Activated CD4-positive, alpha-beta memory T cell treated with anti-CD3 and anti-CD28 coated beads, Interleukin-2, amount 10 ng/mL, durations not matched to agents 7 days and 5 days (primary cell): ENCODE measurements at regions of chr1 and their contacts with region 1.

Region 1: DNA sequence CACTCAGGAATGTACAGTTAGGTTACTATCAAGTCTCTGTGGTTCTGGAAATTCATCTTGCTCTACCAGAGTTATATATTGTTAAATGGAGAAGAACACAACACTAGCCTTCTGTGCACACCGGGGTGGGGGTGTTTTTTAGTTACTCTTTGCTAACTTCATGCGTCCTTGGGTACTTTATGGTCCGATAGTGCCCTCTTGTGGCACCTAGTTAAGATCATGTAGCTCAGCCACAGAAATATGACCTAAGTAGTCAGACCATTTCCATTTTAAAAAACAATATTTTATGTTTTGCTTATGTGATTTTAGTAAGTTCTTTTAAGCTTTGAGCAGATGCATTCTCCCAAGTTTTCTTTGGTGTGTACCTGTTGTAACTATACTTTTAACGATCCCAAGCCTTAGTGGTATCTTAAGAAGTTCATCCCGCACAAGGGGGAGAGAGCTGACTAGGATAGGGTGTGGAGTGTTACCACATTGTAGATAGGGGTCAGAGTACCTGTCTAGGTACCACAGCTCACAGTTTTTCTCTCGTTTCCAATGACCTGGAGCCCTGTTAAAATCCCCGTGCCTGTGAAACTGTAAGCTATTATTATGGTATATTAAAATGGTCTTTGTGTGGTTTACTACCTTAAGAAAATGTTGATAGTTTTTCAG is 20.6 kb upstream of the SH3D21 start:
- DNase-seq: peak; percentile 65
- H3K4me3 Mint-ChIP-seq: no peak overlapping the region
- H3K27ac Mint-ChIP-seq: peak overlapping the region; percentile 61
- H3K4me1 Mint-ChIP-seq: peaks cover 21% of the 10 kb centered on the region
- H3K27me3 Mint-ChIP-seq: no peaks in the 10 kb centered on the region

Region 2: DNA sequence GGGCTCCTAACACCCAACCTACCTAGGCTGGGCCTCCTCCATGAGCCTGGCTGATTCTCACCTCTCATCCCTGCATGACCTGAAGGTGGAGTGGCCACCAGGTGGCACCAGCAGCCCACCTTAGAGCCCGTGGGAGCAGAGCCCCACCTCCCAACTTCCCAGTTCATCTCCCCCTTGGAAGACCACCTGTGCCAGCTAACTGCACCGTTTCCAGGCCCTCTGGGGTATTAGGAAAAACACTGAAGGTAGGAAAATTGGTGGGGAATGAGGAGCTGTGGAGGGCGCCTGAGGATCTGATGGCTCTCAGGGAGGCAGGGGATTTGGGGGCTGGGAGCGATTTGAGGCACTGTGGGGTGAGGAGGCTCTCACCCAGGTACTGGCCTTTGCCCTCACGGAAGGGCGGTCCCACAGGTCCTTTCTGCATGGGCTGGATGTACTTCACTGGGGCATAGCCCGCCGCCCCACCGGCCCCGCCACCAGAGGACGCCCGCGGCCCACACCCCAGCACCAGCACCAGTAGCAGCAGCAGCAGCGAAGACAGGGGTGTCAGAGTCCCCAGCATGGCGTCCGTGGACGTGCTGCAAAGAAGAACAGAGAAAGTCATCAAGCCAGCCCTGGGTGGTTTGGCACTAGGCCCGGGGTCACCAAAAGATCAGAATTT is 185.8 kb before region 1 on chr1:
- CTCF ChIA-PET with region 1: interaction called, 22 read pairs
- POLR2A ChIA-PET with region 1: no interaction called
- DNase-seq: peak; percentile 78
- H3K4me3 Mint-ChIP-seq: no peak overlapping the region
- H3K27ac Mint-ChIP-seq: no peak overlapping the region
- H3K4me1 Mint-ChIP-seq: peaks cover 7% of the 10 kb centered on the region
- H3K27me3 Mint-ChIP-seq: no peaks in the 10 kb centered on the region

Region 3: GRCh38 chr1:36160949-36161485 is 124.6 kb before region 1 on chr1:
- CTCF ChIA-PET with region 1: interaction called, 13 read pairs
- POLR2A ChIA-PET with region 1: interaction called, 8 read pairs
- DNase-seq: peak; percentile 84
- H3K4me3 Mint-ChIP-seq: peak overlapping the region; percentile 74
- H3K27ac Mint-ChIP-seq: peak overlapping the region; percentile 88
- H3K4me1 Mint-ChIP-seq: peaks cover 67% of the 10 kb centered on the region
- H3K27me3 Mint-ChIP-seq: no peaks in the 10 kb centered on the region

Region 4: GRCh38 chr1:36269408-36269838 is 16.2 kb before region 1 on chr1:
- CTCF ChIA-PET with region 1: interaction called, 11 read pairs
- POLR2A ChIA-PET with region 1: no interaction called
- DNase-seq: no peak
- H3K4me3 Mint-ChIP-seq: no peak overlapping the region
- H3K27ac Mint-ChIP-seq: no peak overlapping the region
- H3K4me1 Mint-ChIP-seq: peaks cover 12% of the 10 kb centered on the region
- H3K27me3 Mint-ChIP-seq: no peaks in the 10 kb centered on the region

Region 5: GRCh38 chr1:36300526-36300925 is 15.0 kb after region 1 on chr1:
- CTCF ChIA-PET with region 1: interaction called, 35 read pairs
- POLR2A ChIA-PET with region 1: no interaction called
- DNase-seq: no peak
- H3K4me3 Mint-ChIP-seq: no peak overlapping the region
- H3K27ac Mint-ChIP-seq: peak overlapping the region; percentile 6
- H3K4me1 Mint-ChIP-seq: peaks cover 21% of the 10 kb centered on the region
- H3K27me3 Mint-ChIP-seq: no peaks in the 10 kb centered on the region

Region 6: GRCh38 chr1:36330940-36331339 is 45.4 kb after region 1 on chr1:
- CTCF ChIA-PET with region 1: no interaction called
- POLR2A ChIA-PET with region 1: no interaction called
- DNase-seq: no peak
- H3K4me3 Mint-ChIP-seq: peak overlapping the region; percentile 7
- H3K27ac Mint-ChIP-seq: no peak overlapping the region
- H3K4me1 Mint-ChIP-seq: peaks cover 44% of the 10 kb centered on the region
- H3K27me3 Mint-ChIP-seq: peaks cover 18% of the 10 kb centered on the region

Region 7: DNA sequence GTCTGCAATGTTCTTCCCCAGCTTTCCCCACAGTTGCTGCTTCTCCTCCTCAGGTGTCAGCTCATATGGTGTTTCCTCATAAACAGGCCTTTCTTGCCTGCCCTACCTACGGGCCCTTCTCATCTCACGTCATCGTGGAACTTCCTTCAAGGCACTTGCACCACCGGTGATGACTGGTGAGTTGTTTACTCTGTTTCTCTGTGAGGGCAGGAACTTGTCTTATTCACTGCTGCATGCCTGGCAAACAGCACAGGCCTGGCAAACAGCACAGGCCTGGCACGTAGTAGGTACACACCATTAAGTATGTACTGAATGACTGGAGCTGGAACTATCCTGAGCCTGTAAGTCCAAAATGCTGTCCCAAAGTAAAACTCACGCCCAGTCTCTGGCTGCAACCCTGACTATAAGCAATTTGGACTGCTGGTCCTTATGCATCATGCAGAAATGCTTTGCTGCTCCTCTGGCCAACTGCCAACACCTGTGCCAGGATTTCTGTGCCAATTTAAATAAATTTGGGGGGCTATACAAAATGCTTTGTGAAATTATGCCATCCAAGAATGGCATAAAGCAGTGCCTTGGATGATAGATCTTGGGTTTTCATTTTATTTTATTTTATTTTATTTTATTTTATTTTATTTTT is 74.5 kb after region 1 on chr1:
- CTCF ChIA-PET with region 1: no interaction called
- POLR2A ChIA-PET with region 1: no interaction called
- DNase-seq: peak; percentile 48
- H3K4me3 Mint-ChIP-seq: no peak overlapping the region
- H3K27ac Mint-ChIP-seq: peak overlapping the region; percentile 81
- H3K4me1 Mint-ChIP-seq: peaks cover 16% of the 10 kb centered on the region
- H3K27me3 Mint-ChIP-seq: no peaks in the 10 kb centered on the region

Region 8: GRCh38 chr1:36796106-36796590 is 510.6 kb after region 1 on chr1:
- CTCF ChIA-PET with region 1: no interaction called
- POLR2A ChIA-PET with region 1: no interaction called
- DNase-seq: no peak
- H3K4me3 Mint-ChIP-seq: no peak overlapping the region
- H3K27ac Mint-ChIP-seq: no peak overlapping the region
- H3K4me1 Mint-ChIP-seq: no peaks in the 10 kb centered on the region
- H3K27me3 Mint-ChIP-seq: peaks cover 1% of the 10 kb centered on the region